ENCODE measurements at regions of chr2 and their contacts with region 1.

Region 1: GRCh38 chr2:196758474-196759377 is 40.8 kb downstream of the GTF3C3 start:
- DNase-seq: peak; percentile 46
- ATAC-seq: peak; percentile 85
- H3K4me3 ChIP-seq: no peak overlapping the region
- H3K27ac ChIP-seq: no peak overlapping the region
- H3K4me1 ChIP-seq: no peaks in the 10 kb centered on the region
- H3K27me3 ChIP-seq: no peaks in the 10 kb centered on the region
- CTCF ChIP-seq: peak; percentile 66
- POLR2A ChIP-seq: no peak
- RAD21 ChIP-seq: peak; percentile 58

Region 2: DNA sequence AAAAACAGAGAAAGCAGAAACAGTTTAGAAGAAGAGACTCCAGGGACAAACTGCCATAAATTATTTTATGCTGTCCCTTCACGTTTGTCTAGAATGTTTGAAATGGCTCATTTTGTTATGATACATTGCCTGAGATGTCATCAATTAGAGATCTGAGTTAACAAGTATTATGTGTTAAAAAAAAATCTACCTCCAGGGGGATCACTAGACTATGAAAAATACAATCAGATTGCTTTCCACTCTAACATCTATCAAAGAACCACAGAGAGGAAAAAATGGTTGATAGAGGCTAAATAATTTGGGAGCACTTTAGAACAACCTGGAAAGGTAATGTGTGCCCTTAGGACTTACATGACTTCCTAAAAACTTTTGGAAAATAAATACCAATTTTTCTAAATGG is 223.0 kb before region 1 on chr2:
- CTCF ChIA-PET with region 1: interaction called, 3 read pairs
- POLR2A ChIA-PET with region 1: no interaction called
- dilution Hi-C with region 1: no loop called
- in situ Hi-C with region 1: no loop called
- intact Hi-C with region 1: loop called (anchors 5 kb)
- DNase-seq: no peak
- ATAC-seq: no peak
- H3K4me3 ChIP-seq: no peak overlapping the region
- H3K27ac ChIP-seq: no peak overlapping the region
- H3K4me1 ChIP-seq: no peaks in the 10 kb centered on the region
- H3K27me3 ChIP-seq: no peaks in the 10 kb centered on the region
- CTCF ChIP-seq: no peak
- POLR2A ChIP-seq: no peak
- RAD21 ChIP-seq: no peak

Region 3: DNA sequence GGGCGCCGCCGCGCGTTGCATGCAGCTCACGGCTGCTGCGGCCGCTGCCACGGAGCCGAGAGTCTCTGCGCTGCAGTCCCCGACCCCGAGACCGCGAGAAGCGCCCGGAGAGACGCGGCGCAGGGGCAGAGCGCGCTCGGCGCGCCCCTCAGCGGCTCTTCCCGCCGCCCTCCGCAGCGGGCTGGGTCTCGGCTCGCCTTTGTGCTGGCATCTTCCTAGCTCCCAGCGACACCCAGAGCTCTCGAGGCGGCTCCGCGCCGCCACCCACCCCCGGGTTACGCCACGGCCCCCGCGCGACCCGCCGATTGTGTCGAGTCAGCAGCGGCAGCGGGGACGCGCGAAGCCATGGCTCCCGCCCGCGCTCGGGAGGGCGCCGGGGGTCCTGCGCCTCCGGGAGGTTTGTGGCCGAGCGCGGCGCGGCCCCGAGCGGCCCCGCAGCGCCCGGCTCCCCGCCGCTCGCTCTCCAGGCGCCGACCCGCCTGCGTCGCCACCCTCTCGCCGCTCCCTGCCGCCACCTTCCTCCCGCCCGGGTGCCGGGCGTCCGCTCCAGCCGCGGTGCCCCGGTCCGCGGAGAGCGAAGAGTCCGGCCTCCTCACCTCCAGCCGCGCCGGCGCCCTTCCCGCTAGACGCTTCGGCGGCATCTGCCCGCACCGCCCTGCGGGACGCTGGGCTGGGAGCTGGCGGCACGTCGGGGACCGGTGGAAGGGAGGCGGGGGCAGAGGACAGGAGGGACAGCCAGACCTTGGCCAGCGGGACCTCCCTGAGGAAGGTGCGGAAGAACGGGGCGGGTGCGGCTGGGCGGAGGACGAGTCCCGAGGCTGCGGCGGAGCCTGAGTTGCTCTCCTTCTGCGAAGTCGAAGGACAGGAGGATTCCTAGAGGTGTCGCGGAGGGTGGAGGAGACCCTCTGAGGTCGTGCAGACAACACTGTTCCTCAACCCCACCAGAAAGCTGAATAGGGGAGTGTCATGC is 165.5 kb before region 1 on chr2:
- CTCF ChIA-PET with region 1: no interaction called
- POLR2A ChIA-PET with region 1: no interaction called
- dilution Hi-C with region 1: no loop called
- in situ Hi-C with region 1: no loop called
- intact Hi-C with region 1: loop called (anchors 5 kb)
- DNase-seq: peak; percentile 57
- ATAC-seq: peak; percentile 83
- H3K4me3 ChIP-seq: peak within 1 kb of the TSS; percentile 96
- H3K27ac ChIP-seq: peak within 1 kb of the TSS; percentile 50; the same call in 1 of the 2 replicates
- H3K4me1 ChIP-seq: no peaks in the 10 kb centered on the region
- H3K27me3 ChIP-seq: no peaks in the 10 kb centered on the region
- CTCF ChIP-seq: no peak
- POLR2A ChIP-seq: peak; percentile 31; the same call in 1 of the 2 replicates
- RAD21 ChIP-seq: no peak